Activated CD8-positive, alpha-beta memory T cell treated with anti-CD3 and anti-CD28 coated beads, Interleukin-2, amount 10 ng/mL, durations not matched to agents 7 days and 5 days (primary cell): ENCODE measurements at regions of chr5 and their contacts with region 1.

Region 1: GRCh38 chr5:14644623-14645237 is 19.8 kb upstream of the OTULIN start:
- DNase-seq: no peak
- ATAC-seq: no peak
- H3K4me3 Mint-ChIP-seq: no peak overlapping the region
- H3K27ac Mint-ChIP-seq: no peak overlapping the region
- H3K4me1 Mint-ChIP-seq: peaks cover 8% of the 10 kb centered on the region
- H3K27me3 Mint-ChIP-seq: peaks cover 27% of the 10 kb centered on the region

Region 2: DNA sequence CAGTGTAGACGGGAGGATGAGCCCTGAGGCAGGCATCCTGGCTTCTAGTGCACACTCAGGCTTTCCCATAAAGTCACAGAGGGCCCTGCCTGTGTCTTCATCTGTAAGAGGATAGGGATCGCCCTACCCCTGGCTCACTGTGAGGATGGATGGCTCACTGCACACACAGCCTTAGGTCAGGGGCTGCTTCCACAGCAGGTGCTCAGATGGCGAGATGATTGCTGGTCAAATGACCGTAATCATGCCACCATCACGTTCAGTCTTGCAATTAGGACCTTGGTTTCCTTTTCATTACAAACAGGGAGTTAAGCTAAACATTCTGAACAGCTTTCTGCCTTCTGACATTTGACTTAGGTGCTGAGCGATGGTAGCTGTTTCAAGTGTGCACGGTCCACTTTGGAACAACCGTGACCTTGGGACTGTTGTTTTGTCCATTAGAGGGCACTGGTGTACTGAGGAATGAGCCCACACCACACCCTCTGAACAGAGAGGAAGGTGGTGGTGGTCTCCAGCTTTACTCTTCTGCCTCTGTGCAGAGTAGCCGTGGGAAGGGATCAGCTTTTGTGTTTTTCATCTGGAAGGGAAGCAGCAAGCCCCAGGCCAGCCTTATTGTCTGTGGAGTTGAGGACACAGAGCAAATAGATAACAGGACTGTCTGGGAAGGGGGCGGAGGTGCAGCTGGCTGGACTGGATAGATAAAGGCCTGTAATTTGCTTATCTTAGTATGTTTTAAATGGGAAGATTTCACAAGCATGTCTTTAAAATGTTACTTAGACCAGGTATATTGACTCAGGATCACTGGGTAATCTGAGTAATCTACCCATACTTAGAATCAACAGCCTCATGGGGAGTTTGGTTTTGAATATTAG is 318.5 kb before region 1 on chr5:
- CTCF ChIA-PET with region 1: interaction called, 17 read pairs
- DNase-seq: no peak
- ATAC-seq: no peak
- H3K4me3 Mint-ChIP-seq: no peak overlapping the region
- H3K27ac Mint-ChIP-seq: no peak overlapping the region
- H3K4me1 Mint-ChIP-seq: peaks cover 6% of the 10 kb centered on the region
- H3K27me3 Mint-ChIP-seq: peaks cover 30% of the 10 kb centered on the region

Region 3: GRCh38 chr5:14373685-14374084 is 271.0 kb before region 1 on chr5:
- CTCF ChIA-PET with region 1: interaction called, 163 read pairs
- DNase-seq: no peak
- ATAC-seq: no peak
- H3K4me3 Mint-ChIP-seq: no peak overlapping the region
- H3K27ac Mint-ChIP-seq: peak overlapping the region; percentile 4
- H3K4me1 Mint-ChIP-seq: peaks cover 26% of the 10 kb centered on the region
- H3K27me3 Mint-ChIP-seq: peaks cover 10% of the 10 kb centered on the region

Region 4: DNA sequence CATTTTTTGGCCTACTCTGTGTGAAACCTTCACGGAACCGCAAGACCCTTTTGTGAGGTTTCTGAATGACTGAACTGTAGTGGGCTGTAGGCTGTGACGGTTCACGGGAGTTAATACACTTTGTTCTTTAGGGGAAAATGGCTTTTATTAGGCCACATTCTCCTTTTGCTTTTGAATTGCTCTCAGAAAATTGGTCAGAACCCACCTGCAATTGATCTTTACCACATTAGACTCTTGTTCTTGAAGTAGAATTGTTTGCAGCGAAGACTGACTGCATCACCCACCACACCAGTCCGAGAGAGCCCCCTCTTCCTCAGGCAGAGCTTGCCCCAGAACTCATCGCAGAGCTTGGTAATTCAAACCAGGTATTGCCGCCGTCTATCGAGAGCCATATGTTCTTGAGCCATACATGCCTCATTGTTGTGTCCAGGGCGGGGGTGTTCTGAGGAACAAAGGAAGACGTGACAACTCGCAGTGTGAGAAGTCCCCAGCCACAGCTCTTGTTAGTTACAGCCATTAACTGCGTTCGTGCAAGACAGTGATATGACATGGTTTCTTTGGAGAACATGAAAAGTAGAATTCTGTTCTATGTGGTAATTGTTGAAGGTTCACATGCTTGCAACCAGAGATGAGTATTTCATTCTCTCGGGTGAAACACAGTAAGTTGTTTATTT is 229.6 kb before region 1 on chr5:
- CTCF ChIA-PET with region 1: interaction called, 13 read pairs
- DNase-seq: peak; percentile 78
- ATAC-seq: peak; percentile 67
- H3K4me3 Mint-ChIP-seq: peak overlapping the region; percentile 55
- H3K27ac Mint-ChIP-seq: peak overlapping the region; percentile 88
- H3K4me1 Mint-ChIP-seq: peaks cover 45% of the 10 kb centered on the region
- H3K27me3 Mint-ChIP-seq: peaks cover 4% of the 10 kb centered on the region

Region 5: DNA sequence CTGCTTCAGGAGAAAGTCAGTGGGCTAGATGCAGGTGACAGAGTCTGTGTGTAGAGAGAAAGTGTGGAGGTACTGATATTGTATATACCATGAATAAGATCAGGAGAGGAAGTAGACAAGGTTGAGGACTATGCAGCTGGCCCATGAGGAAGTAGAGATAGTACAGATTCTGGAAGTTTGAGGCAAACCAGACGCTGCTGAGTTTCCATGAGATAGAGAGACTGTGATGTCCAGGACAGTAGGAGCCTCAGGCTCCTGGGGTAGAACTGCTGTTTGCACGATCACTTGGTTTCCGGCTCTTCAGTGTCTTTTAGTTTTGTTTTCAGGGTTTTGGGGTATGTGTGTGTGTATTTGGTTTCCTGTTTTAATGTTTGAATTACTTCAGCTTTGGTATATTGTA is 49.5 kb before region 1 on chr5:
- CTCF ChIA-PET with region 1: interaction called, 26 read pairs
- DNase-seq: peak; percentile 80
- ATAC-seq: peak; percentile 79
- H3K4me3 Mint-ChIP-seq: peak overlapping the region; percentile 64
- H3K27ac Mint-ChIP-seq: peak overlapping the region; percentile 98
- H3K4me1 Mint-ChIP-seq: peaks cover 87% of the 10 kb centered on the region
- H3K27me3 Mint-ChIP-seq: no peaks in the 10 kb centered on the region

Region 6: DNA sequence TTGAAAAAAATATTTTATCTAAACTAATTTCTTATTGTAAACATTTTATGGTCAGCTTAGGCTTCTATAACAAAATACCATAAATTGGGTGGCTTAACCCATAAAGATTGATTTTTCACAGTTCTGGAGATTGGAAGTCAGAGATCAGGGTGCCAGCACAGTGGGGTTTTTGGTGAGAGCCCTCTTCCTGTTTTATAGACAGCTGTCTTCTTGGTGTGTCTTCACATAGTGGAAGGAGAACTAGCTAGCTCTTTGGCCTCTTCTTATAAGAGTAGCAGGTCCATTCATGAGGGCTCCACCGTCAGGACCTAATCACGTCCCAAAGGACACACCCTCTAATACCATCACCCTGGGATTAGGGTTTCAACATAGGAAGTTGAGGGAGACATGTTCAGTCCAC is 36.6 kb before region 1 on chr5:
- CTCF ChIA-PET with region 1: no interaction called
- DNase-seq: no peak
- ATAC-seq: no peak
- H3K4me3 Mint-ChIP-seq: no peak overlapping the region
- H3K27ac Mint-ChIP-seq: no peak overlapping the region
- H3K4me1 Mint-ChIP-seq: peaks cover 11% of the 10 kb centered on the region
- H3K27me3 Mint-ChIP-seq: no peaks in the 10 kb centered on the region

Region 7: GRCh38 chr5:14676320-14676719 is 31.6 kb after region 1 on chr5:
- CTCF ChIA-PET with region 1: interaction called, 11 read pairs
- DNase-seq: peak; percentile 82
- ATAC-seq: peak; percentile 79
- H3K4me3 Mint-ChIP-seq: peak overlapping the region; percentile 63
- H3K27ac Mint-ChIP-seq: peak overlapping the region; percentile 87
- H3K4me1 Mint-ChIP-seq: peaks cover 75% of the 10 kb centered on the region
- H3K27me3 Mint-ChIP-seq: no peaks in the 10 kb centered on the region

Region 8: DNA sequence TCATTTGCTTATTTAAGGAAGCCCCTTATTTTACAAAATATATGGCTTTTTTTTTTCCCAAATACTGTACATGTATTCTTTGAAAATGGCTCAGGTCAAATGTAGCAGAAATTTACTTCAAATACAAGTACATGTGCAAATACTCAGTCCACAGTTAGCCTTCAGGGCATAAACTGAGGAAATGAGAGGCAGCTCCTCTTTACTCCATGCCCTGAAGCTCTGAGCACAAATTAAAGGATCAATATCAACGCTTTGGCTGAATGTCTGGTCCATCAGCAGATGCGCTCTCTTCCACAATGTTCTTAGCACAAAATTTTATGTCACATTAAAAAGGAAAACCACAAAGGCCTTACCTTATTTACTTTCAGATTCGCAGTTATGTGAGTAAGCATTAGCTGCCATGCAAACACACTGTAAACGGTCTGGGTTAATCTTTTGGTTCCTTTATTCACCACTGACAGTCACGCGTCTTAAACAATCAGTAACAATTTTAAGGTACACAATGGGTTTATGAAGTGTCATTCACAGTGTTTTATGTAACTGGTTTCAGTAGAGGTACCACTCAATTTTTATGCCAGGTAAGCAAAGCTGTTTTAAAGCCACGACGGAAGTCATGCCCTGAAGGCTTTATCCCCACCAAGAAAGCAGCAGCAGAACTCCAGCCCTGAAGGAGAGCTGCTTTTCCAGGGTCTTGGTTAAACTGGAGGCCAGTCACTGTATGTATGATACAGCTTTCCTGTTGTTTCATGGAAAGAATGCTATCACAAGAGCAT is 123.2 kb after region 1 on chr5:
- CTCF ChIA-PET with region 1: no interaction called
- DNase-seq: no peak
- ATAC-seq: peak; percentile 83
- H3K4me3 Mint-ChIP-seq: no peak overlapping the region
- H3K27ac Mint-ChIP-seq: peak overlapping the region; percentile 50
- H3K4me1 Mint-ChIP-seq: peaks cover 20% of the 10 kb centered on the region
- H3K27me3 Mint-ChIP-seq: no peaks in the 10 kb centered on the region